CD8-positive, alpha-beta memory T cell (primary cell): ENCODE measurements at regions of chr4 and their contacts with region 1.

Region 1: DNA sequence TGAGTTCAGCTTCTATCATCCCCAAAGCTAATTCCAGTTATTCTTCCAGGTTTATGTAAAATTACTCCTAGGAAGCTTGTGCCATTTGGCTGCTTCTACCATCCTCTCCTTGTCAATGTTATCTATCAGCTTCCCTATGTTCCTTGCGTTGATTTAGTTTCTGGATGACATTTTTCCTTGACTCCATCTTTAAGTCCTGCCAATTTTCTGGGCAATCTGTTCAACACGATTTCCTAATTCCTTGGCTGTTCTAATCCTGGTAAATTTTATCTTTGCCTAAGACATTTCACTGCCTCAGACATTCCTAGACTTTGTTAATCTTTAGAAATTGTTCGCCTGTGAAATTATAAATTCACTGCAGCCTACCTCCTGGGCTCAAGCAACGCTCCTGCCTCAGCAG is 125.1 kb downstream of the PDS5A start:
- DNase-seq: no peak
- H3K4me3 ChIP-seq: no peak overlapping the region
- H3K4me3 Mint-ChIP-seq: no peak overlapping the region
- H3K27ac ChIP-seq: no peak overlapping the region
- H3K27ac Mint-ChIP-seq: peak overlapping the region in 4 of 8 donors; percentile 0 to 85 (median 20)
- H3K4me1 ChIP-seq: no peaks in the 10 kb centered on the region
- H3K4me1 Mint-ChIP-seq: peaks cover 3 to 8% (median 7%) of the 10 kb centered on the region in 3 donors
- H3K27me3 ChIP-seq: no peaks in the 10 kb centered on the region
- H3K27me3 Mint-ChIP-seq: peaks cover 0 to 2% of the 10 kb centered on the region in 2 donors

Region 2: GRCh38 chr4:39808231-39808749 is 44.3 kb before region 1 on chr4:
- CTCF ChIA-PET with region 1: no interaction called
- POLR2A ChIA-PET with region 1: interaction called, 11 read pairs
- DNase-seq: no peak
- H3K4me3 ChIP-seq: no peak overlapping the region
- H3K4me3 Mint-ChIP-seq: no peak overlapping the region
- H3K27ac ChIP-seq: no peak overlapping the region
- H3K27ac Mint-ChIP-seq: peak overlapping the region in 1 of 8 donors; percentile 33
- H3K4me1 ChIP-seq: no peaks in the 10 kb centered on the region
- H3K4me1 Mint-ChIP-seq: peaks cover 0 to 5% (median 4%) of the 10 kb centered on the region in 3 donors
- H3K27me3 ChIP-seq: no peaks in the 10 kb centered on the region
- H3K27me3 Mint-ChIP-seq: peaks cover 0 to 8% of the 10 kb centered on the region in 2 donors